ENCODE measurements at regions of chr3 and their contacts with region 1.

Region 1: GRCh38 chr3:120742198-120742849 is at the starts of genes GTF2E1 and RABL3:
- H3K4me3 Mint-ChIP-seq: peak within 1 kb of the TSS; percentile 93
- H3K27ac Mint-ChIP-seq: peak within 1 kb of the TSS; percentile 97
- H3K4me1 Mint-ChIP-seq: peaks cover 34% of the 10 kb centered on the region
- H3K27me3 Mint-ChIP-seq: no peaks in the 10 kb centered on the region

Region 2: GRCh38 chr3:120536642-120537041 is 205.7 kb before region 1 on chr3:
- intact Hi-C with region 1: no loop called
- H3K4me3 Mint-ChIP-seq: no peak overlapping the region
- H3K27ac Mint-ChIP-seq: no peak overlapping the region
- H3K4me1 Mint-ChIP-seq: no peaks in the 10 kb centered on the region
- H3K27me3 Mint-ChIP-seq: no peaks in the 10 kb centered on the region

Region 3: DNA sequence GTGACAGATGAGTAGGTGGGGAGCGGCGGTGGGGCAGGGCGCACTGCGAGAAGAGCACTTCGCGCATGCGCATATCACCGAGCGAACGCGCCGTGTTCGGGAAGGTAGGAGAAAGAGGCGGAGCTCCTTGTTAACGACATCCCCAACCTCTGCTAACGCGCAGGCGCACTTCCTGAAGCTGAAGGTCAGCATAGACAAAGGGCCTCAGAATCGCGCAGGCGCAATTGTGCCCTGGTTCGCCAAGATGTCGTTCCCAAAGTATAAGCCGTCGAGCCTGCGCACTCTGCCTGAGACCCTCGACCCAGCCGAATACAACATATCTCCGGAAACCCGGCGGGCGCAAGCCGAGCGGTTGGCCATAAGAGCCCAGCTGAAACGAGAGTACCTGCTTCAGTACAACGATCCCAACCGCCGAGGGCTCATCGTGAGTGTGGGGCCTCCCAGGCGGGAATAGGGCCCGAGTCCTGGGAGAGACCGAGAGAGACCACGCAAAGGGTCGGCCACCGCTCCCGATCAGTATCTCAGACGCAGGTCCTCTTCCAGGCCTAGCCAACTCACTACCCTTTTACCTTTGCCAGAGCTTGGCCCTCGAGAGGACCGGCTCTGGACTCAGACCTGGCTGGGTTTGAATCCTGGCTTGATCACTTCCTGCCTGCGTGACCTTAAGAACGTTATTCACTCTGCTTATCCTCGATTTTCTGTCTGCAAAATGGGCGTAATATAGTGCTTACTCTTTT is 146.0 kb before region 1 on chr3 and contains the start of gene NDUFB4:
- intact Hi-C with region 1: loop called (anchors 1 kb)
- H3K4me3 Mint-ChIP-seq: peak within 1 kb of the TSS; percentile 88
- H3K27ac Mint-ChIP-seq: peak within 1 kb of the TSS; percentile 93
- H3K4me1 Mint-ChIP-seq: peaks cover 17% of the 10 kb centered on the region
- H3K27me3 Mint-ChIP-seq: no peaks in the 10 kb centered on the region

Region 4: GRCh38 chr3:120688121-120688520 is 54.2 kb before region 1 on chr3:
- intact Hi-C with region 1: loop called (anchors 2 kb)
- H3K4me3 Mint-ChIP-seq: no peak overlapping the region
- H3K27ac Mint-ChIP-seq: no peak overlapping the region
- H3K4me1 Mint-ChIP-seq: peaks cover 5% of the 10 kb centered on the region
- H3K27me3 Mint-ChIP-seq: no peaks in the 10 kb centered on the region

Region 5: GRCh38 chr3:120780977-120781376 is 38.7 kb after region 1 on chr3:
- intact Hi-C with region 1: loop called (anchors 5 kb)
- H3K4me3 Mint-ChIP-seq: peak overlapping the region; percentile 54
- H3K27ac Mint-ChIP-seq: peak overlapping the region; percentile 83
- H3K4me1 Mint-ChIP-seq: peaks cover 11% of the 10 kb centered on the region
- H3K27me3 Mint-ChIP-seq: no peaks in the 10 kb centered on the region